Gastrocnemius medialis (tissue), 4 donors: ENCODE measurements at regions of chr11 and their contacts with region 1.

Region 1: DNA sequence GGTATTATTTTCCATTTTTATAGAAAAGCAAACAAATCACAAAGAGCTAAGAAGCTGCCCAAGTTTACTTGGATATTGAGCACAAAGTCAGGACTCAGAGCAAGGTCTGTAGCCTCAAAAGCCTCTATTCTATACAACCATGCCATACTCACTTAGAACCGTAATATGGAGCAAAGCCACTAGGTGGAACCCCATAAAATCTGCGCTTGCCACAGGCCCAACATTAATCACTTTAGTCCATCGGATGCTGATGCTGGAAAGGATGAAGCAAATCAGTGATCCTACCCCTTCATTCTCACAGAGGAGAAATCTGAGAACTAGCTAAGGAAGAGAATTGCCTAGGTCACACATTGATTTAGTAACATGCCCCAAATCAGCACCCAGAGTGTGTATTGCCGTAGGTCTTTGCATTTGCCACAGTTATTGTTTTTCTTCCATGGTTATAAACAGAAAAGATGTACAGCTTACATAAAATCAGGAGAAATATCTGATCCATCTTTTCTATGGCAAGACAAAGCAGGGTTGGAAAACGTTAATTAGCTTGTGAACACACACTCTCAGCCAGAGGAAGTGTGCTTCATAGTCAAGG is 56.7 kb upstream of the RAB38 start:
- DNase-seq: no peak
- ATAC-seq: no peak
- H3K4me3 ChIP-seq: no peak overlapping the region
- H3K27ac ChIP-seq: no peak overlapping the region
- H3K4me1 ChIP-seq: no peaks in the 10 kb centered on the region
- H3K27me3 ChIP-seq: no peaks in the 10 kb centered on the region
- CTCF ChIP-seq: peak in 4 of 5 experiments; percentile 24 to 63 (median 46)
- POLR2A ChIP-seq: no peak

Region 2: GRCh38 chr11:88535916-88536547 is 304.0 kb after region 1 on chr11:
- in situ Hi-C with region 1: loop called in 2 of 4 experiments (anchors 5 to 10 kb)
- intact Hi-C with region 1: no loop called
- DNase-seq: no peak
- ATAC-seq: no peak
- H3K4me3 ChIP-seq: no peak overlapping the region
- H3K27ac ChIP-seq: no peak overlapping the region
- H3K4me1 ChIP-seq: no peaks in the 10 kb centered on the region
- H3K27me3 ChIP-seq: no peaks in the 10 kb centered on the region
- CTCF ChIP-seq: no peak
- POLR2A ChIP-seq: no peak